HCT116 (cell line): ENCODE measurements at regions of chr19 and their contacts with region 1.

Region 1: DNA sequence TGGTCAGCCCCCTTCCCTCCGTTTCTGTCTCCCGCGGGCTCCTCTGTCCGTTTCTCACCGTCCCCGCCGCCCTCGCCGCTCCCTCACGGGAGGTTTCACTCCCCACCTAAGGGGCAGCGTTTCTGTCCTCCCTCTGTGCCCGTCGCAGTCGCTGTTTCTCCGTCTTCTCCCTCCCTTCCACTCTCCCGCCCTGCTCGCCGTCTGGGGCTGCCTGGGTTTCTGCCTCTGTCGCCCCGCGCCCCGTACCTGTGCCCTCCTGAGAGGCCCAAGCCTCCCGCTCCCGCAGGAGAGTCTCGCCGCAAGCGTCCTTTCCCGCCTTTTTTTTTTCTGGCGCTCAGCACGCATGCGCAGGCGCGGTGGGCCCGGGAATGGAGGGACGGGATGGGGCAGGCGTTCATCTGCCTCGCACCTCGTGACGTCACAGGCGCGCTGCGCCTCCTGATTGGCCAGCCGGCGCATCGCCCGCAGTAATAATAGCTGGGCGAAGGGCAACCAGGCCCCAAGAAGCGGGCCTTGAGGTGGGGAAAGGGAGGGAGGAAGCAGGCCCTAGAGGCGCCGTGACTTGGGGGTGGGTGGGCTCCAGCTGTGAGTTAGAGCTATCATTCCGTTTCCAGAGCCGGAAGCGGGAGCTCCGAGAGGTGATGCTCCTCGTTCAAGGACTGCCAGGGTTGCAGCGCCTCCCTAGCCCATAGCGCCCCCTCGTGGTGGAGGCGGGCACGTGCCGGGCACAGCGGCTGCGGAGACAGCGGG is 15.4 kb downstream of the SSC5D start:
- DNase-seq: peak; percentile 89
- ATAC-seq: peak; percentile 96
- H3K4me3 ChIP-seq: no peak overlapping the region
- H3K27ac ChIP-seq: no peak overlapping the region
- H3K4me1 ChIP-seq: peaks cover 0 to 4% of the 10 kb centered on the region in 2 experiments; a peak in 1 of 4 replicates
- H3K27me3 ChIP-seq: no peaks in the 10 kb centered on the region
- CTCF ChIP-seq: peak; percentile 80 to 92 (median 89)
- POLR2A ChIP-seq: no peak
- RAD21 ChIP-seq: peak; percentile 94

Region 2: DNA sequence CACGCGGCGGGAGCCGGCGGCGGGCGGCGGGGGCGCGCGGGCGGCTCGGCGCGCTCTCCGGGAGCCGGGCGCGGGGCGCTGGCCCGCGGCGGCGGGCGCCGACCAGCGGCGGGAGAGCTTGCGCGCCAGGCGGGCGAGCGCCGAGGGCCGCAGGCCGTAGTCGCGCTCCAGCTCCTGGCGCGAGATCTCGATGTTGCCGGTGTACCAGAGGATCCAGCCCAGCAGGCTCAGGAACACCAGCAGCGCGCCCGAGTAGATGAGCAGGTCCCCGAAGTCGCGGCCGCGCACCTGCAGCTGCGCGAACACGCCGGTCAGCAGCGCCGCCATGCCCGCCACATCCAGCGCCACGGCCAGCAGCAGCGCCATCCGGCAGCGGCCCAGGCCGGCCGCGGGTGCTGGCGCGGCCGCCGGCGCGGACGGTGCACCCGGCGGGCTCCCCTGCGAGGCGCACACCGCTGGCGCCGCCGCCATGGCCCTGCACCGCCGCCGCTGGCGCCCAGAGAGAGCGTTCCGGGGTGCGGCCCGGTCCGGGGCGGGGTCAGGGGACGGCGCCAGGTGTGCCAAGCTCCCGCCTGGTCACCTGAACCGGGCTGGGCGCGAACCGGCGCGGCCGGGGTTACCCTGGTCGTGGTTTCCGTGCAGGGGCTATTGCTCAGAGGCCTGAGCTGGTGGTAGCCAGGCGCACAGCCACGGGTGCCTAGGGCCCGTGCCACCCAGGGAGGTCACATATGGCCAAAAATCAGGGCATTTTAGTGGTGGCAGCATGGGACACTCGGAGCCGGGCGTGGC is 119.7 kb before region 1 on chr19 and contains the start of gene TMEM238:
- CTCF ChIA-PET with region 1: no interaction called
- POLR2A ChIA-PET with region 1: no interaction called
- RAD21 ChIA-PET with region 1: no interaction called
- intact Hi-C with region 1: no loop called
- DNase-seq: no peak
- ATAC-seq: peak; percentile 41
- H3K4me3 ChIP-seq: peak within 1 kb of the TSS; percentile 99 to 100
- H3K27ac ChIP-seq: peak within 1 kb of the TSS; percentile 99
- H3K4me1 ChIP-seq: peaks cover 6 to 53% of the 10 kb centered on the region in 2 experiments; a peak in 3 of 4 replicates
- H3K27me3 ChIP-seq: no peaks in the 10 kb centered on the region
- CTCF ChIP-seq: no peak
- POLR2A ChIP-seq: no peak
- RAD21 ChIP-seq: no peak
- total RNA-seq, gene TMEM238: 21.0 TPM

Region 3: GRCh38 chr19:55467236-55468053 is 36.2 kb before region 1 on chr19:
- CTCF ChIA-PET with region 1: interaction called, 10 read pairs
- POLR2A ChIA-PET with region 1: no interaction called
- RAD21 ChIA-PET with region 1: interaction called, 3 read pairs
- intact Hi-C with region 1: no loop called
- DNase-seq: no peak
- ATAC-seq: peak; percentile 75
- H3K4me3 ChIP-seq: no peak overlapping the region
- H3K27ac ChIP-seq: no peak overlapping the region
- H3K4me1 ChIP-seq: peaks cover 13 to 37% of the 10 kb centered on the region in 2 experiments; a peak in 3 of 4 replicates
- H3K27me3 ChIP-seq: no peaks in the 10 kb centered on the region
- CTCF ChIP-seq: peak in 2 of 3 experiments; percentile 98 to 99; a peak in 5 of 6 replicates
- POLR2A ChIP-seq: peak; percentile 67
- RAD21 ChIP-seq: no peak

Region 4: DNA sequence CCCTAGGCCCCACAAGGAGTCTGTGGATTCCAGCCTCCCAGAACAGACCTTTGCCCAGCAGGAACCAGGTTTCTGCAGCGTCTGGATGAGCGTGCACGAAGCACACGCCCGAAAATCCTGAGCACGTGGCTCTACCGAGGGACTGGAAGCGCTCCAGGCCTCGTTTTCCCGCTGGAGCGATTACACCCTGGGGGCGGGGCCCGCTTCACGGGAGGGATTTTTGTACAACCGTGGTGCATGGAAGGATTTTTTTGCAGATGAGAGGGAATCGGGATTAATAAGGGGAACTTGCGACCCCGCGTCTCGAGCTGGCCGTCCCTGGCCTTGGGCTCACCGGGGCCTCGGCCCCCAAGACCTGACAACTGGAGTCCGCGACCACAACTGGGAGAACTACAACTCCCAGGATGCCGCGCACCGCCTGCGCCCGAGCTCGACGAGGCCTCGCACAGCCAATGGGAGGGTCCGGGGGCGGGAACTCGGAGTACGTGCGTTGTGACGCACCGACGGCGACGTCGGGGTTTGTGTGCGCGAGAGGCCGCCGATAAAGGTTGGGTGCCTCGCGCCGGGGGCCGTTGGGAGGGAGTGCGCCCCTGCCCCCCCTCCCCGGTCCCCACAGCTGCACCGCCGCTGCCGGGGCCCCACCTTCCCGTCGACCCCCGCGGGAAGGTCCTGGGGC is 27.4 kb before region 1 on chr19 and contains the start of gene ZNF628:
- CTCF ChIA-PET with region 1: interaction called, 15 read pairs
- POLR2A ChIA-PET with region 1: interaction called, 6 read pairs
- RAD21 ChIA-PET with region 1: no interaction called
- intact Hi-C with region 1: no loop called
- DNase-seq: peak; percentile 96
- ATAC-seq: peak; percentile 78
- H3K4me3 ChIP-seq: peak within 1 kb of the TSS; percentile 63 to 73
- H3K27ac ChIP-seq: peak within 1 kb of the TSS; percentile 98
- H3K4me1 ChIP-seq: peaks cover 35 to 53% of the 10 kb centered on the region in 2 experiments
- H3K27me3 ChIP-seq: no peaks in the 10 kb centered on the region
- CTCF ChIP-seq: no peak
- POLR2A ChIP-seq: no peak
- RAD21 ChIP-seq: no peak
- total RNA-seq, gene ZNF628: 14.9 TPM